ENCODE measurements at regions of chr6 and their contacts with region 1.

Region 1: DNA sequence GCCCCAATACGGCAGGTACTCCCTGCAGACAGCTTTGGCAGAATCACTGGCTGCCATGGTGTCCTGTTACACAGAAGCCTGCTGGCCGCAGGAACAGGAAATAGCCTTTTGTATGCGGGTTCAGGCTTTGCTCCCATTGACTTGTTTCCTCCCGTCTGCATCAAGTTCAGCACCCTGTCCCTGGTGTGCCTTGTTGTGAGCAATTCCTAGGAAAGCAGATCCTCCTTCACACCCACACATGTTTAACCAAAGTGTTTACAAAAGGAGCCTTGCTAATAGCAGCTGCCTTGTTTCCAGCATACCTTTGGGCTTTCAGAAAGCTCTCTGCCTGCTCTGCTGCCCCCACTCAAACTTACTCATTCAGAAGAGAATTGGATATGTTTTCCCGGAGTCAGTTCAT is 127.2 kb upstream of the SUPT3H start:
- DNase-seq: no peak
- ATAC-seq: no peak
- H3K4me3 ChIP-seq: no peak overlapping the region
- H3K4me3 Mint-ChIP-seq: no peak overlapping the region
- H3K27ac ChIP-seq: no peak overlapping the region
- H3K27ac Mint-ChIP-seq: no peak overlapping the region
- H3K4me1 ChIP-seq: no peaks in the 10 kb centered on the region
- H3K4me1 Mint-ChIP-seq: no peaks in the 10 kb centered on the region
- H3K27me3 ChIP-seq: no peaks in the 10 kb centered on the region
- H3K27me3 Mint-ChIP-seq: no peaks in the 10 kb centered on the region
- CTCF ChIP-seq: no peak

Region 2: GRCh38 chr6:45454008-45454911 is 50.7 kb before region 1 on chr6:
- CTCF ChIA-PET with region 1: no interaction called
- POLR2A ChIA-PET with region 1: no interaction called
- intact Hi-C with region 1: no loop called
- DNase-seq: no peak
- ATAC-seq: no peak
- H3K4me3 ChIP-seq: no peak overlapping the region
- H3K4me3 Mint-ChIP-seq: no peak overlapping the region
- H3K27ac ChIP-seq: no peak overlapping the region
- H3K27ac Mint-ChIP-seq: no peak overlapping the region
- H3K4me1 ChIP-seq: no peaks in the 10 kb centered on the region
- H3K4me1 Mint-ChIP-seq: no peaks in the 10 kb centered on the region
- H3K27me3 ChIP-seq: no peaks in the 10 kb centered on the region
- H3K27me3 Mint-ChIP-seq: no peaks in the 10 kb centered on the region
- CTCF ChIP-seq: no peak

Region 3: DNA sequence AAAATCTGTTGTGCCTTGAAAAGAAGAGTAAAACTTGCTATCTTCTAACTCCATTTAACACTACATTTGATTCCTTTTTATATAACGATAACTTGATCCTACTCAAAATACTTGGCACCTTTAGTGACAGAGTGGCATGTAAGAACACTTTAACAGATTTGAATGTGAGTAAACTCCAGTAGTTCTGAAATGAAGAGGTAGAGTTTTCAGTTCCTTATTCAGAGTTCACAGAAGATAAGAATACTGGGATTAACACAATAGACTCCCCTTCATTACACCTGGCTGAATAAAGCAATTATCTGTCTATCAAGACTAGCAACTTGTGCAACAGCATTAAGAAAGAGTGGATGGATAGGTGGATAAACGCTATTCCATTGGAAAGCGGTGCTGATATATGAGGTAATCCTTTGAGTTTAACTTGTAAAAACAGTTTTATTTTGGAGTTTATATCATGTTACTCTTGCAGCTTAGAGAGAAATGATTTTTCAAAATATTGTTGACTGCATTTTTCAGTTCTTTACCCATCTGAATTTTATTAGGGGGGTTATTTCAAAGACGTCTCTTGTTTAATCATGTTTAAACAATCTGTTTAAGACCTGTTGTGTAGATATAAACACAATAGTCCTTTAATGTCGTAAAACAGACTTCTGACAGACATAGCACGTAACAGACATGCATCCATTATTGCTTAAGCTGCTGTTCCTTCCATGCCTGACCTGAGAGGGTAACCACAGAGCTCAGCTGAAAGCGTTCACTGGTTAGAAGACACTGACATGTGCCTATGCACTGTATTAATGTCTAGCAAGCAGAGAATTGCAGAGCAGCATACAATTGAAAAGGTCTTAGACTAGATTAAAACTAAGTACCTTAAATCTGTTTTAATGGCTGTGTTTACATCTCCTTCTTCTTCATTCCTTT is 24.9 kb before region 1 on chr6:
- CTCF ChIA-PET with region 1: no interaction called
- POLR2A ChIA-PET with region 1: interaction called, 13 read pairs
- intact Hi-C with region 1: no loop called
- DNase-seq: no peak
- ATAC-seq: no peak
- H3K4me3 ChIP-seq: no peak overlapping the region
- H3K4me3 Mint-ChIP-seq: no peak overlapping the region
- H3K27ac ChIP-seq: no peak overlapping the region
- H3K27ac Mint-ChIP-seq: peak overlapping the region; percentile 16
- H3K4me1 ChIP-seq: peaks cover 3 to 14% of the 10 kb centered on the region in 2 donors
- H3K4me1 Mint-ChIP-seq: peaks cover 13% of the 10 kb centered on the region
- H3K27me3 ChIP-seq: no peaks in the 10 kb centered on the region
- H3K27me3 Mint-ChIP-seq: no peaks in the 10 kb centered on the region
- CTCF ChIP-seq: no peak

Region 4: GRCh38 chr6:45637611-45638257 is 132.8 kb after region 1 on chr6:
- CTCF ChIA-PET with region 1: no interaction called
- POLR2A ChIA-PET with region 1: no interaction called
- intact Hi-C with region 1: no loop called
- DNase-seq: no peak
- ATAC-seq: no peak
- H3K4me3 ChIP-seq: no peak overlapping the region
- H3K4me3 Mint-ChIP-seq: no peak overlapping the region
- H3K27ac ChIP-seq: no peak overlapping the region
- H3K27ac Mint-ChIP-seq: no peak overlapping the region
- H3K4me1 ChIP-seq: no peaks in the 10 kb centered on the region
- H3K4me1 Mint-ChIP-seq: no peaks in the 10 kb centered on the region
- H3K27me3 ChIP-seq: no peaks in the 10 kb centered on the region
- H3K27me3 Mint-ChIP-seq: peaks cover 5% of the 10 kb centered on the region
- CTCF ChIP-seq: no peak

Region 5: GRCh38 chr6:45843848-45844521 is 339.0 kb after region 1 on chr6:
- CTCF ChIA-PET with region 1: no interaction called
- POLR2A ChIA-PET with region 1: no interaction called
- intact Hi-C with region 1: no loop called
- DNase-seq: no peak
- ATAC-seq: no peak
- H3K4me3 ChIP-seq: no peak overlapping the region
- H3K4me3 Mint-ChIP-seq: no peak overlapping the region
- H3K27ac ChIP-seq: no peak overlapping the region
- H3K27ac Mint-ChIP-seq: no peak overlapping the region
- H3K4me1 ChIP-seq: no peaks in the 10 kb centered on the region
- H3K4me1 Mint-ChIP-seq: no peaks in the 10 kb centered on the region
- H3K27me3 ChIP-seq: no peaks in the 10 kb centered on the region
- H3K27me3 Mint-ChIP-seq: no peaks in the 10 kb centered on the region
- CTCF ChIP-seq: no peak

Region 6: GRCh38 chr6:45881705-45882467 is 376.9 kb after region 1 on chr6:
- CTCF ChIA-PET with region 1: no interaction called
- POLR2A ChIA-PET with region 1: no interaction called
- intact Hi-C with region 1: no loop called
- DNase-seq: no peak
- ATAC-seq: no peak
- H3K4me3 ChIP-seq: no peak overlapping the region
- H3K4me3 Mint-ChIP-seq: no peak overlapping the region
- H3K27ac ChIP-seq: no peak overlapping the region
- H3K27ac Mint-ChIP-seq: no peak overlapping the region
- H3K4me1 ChIP-seq: no peaks in the 10 kb centered on the region
- H3K4me1 Mint-ChIP-seq: no peaks in the 10 kb centered on the region
- H3K27me3 ChIP-seq: no peaks in the 10 kb centered on the region
- H3K27me3 Mint-ChIP-seq: peaks cover 6% of the 10 kb centered on the region
- CTCF ChIP-seq: no peak

Measured in B cell (primary cell).